ENCODE measurements at regions of chr3 and their contacts with region 1.

Region 1: DNA sequence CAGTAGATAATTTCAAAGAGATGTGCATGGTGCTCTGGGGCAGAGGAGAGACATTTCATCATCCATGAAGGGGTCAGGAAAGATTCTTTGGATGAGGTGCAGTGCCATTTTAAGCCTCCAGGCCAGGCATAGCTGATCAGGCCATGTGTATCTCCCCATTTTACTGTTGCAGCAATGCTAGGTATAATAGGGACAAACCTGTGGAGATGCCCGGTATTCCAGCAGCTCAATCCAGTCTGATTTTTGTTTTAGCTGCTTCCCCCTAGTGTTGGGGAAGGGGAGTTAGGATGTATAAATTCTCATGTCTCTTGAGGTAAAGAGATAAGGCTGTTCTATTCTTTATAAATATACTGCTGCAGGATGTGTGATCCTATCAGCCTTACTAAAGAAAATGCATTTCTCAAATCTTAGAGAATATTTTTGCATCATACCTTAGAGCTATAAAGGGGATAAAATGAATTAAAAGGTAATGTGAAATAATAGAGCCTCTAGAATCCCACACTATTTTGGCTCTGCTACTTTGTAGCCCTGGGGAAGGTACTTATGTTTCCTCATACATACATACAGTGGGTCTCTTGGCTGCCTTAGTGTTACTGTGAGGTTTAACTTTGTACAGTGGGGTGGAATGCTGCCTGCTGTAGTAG is 5.2 kb downstream of the CDV3 start:
- DNase-seq: peak; percentile 53
- H3K4me3 ChIP-seq: no peak overlapping the region
- H3K27ac ChIP-seq: no peak overlapping the region
- H3K4me1 ChIP-seq: peaks cover 26% of the 10 kb centered on the region
- H3K27me3 ChIP-seq: no peaks in the 10 kb centered on the region
- CTCF ChIP-seq: peak; percentile 49 to 56
- POLR2A ChIP-seq: no peak

Region 2: DNA sequence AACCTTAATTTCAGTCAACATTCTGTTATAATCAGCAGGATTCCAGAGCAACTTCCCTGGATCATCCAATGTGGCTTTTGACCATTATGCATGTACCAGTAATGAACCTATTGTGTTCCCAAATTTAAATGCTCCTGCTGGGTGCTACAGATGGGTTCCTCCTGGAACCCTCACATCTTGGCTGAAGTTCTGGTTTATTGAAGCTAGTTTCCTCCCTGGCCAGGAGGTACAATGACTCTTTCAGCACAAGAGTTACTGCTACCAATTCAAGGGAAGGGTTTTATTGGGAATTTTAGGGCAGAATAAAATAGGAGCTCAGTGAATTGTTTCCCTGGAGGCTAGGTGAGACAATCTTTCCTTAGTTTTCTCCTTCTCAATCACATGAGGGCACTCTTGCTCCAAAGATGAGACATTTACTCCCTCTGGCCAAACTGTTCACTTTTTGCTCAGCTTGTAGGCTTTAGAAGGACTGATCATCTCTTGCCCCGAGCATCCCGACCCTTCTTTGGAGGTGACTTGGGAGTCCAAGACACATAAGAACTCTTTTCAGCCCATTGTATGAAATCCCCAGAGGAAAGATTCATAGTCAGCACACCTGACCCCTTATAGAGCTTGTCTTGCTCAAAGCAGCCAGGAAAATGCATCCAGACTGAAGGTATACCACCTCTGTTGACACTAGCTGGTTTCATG is 847.6 kb before region 1 on chr3:
- CTCF ChIA-PET with region 1: interaction called, 19 read pairs
- POLR2A ChIA-PET with region 1: no interaction called
- dilution Hi-C with region 1: no loop called
- intact Hi-C with region 1: no loop called
- DNase-seq: peak; percentile 61
- H3K4me3 ChIP-seq: no peak overlapping the region
- H3K27ac ChIP-seq: no peak overlapping the region
- H3K4me1 ChIP-seq: peaks cover 2% of the 10 kb centered on the region
- H3K27me3 ChIP-seq: peaks cover 7 to 18% of the 10 kb centered on the region in 2 experiments
- CTCF ChIP-seq: peak; percentile 27 to 40
- POLR2A ChIP-seq: no peak

Region 3: GRCh38 chr3:133237380-133237779 is 341.3 kb before region 1 on chr3:
- CTCF ChIA-PET with region 1: no interaction called
- POLR2A ChIA-PET with region 1: no interaction called
- dilution Hi-C with region 1: no loop called
- intact Hi-C with region 1: no loop called
- DNase-seq: no peak
- H3K4me3 ChIP-seq: no peak overlapping the region
- H3K27ac ChIP-seq: no peak overlapping the region
- H3K4me1 ChIP-seq: no peaks in the 10 kb centered on the region
- H3K27me3 ChIP-seq: no peaks in the 10 kb centered on the region
- CTCF ChIP-seq: no peak
- POLR2A ChIP-seq: no peak

Region 4: GRCh38 chr3:133441867-133442270 is 136.8 kb before region 1 on chr3:
- CTCF ChIA-PET with region 1: interaction called, 11 read pairs
- POLR2A ChIA-PET with region 1: no interaction called
- dilution Hi-C with region 1: no loop called
- intact Hi-C with region 1: no loop called
- DNase-seq: no peak
- H3K4me3 ChIP-seq: no peak overlapping the region
- H3K27ac ChIP-seq: no peak overlapping the region
- H3K4me1 ChIP-seq: no peaks in the 10 kb centered on the region
- H3K27me3 ChIP-seq: peaks cover 0 to 4% of the 10 kb centered on the region in 2 experiments
- CTCF ChIP-seq: no peak
- POLR2A ChIP-seq: no peak

Region 5: DNA sequence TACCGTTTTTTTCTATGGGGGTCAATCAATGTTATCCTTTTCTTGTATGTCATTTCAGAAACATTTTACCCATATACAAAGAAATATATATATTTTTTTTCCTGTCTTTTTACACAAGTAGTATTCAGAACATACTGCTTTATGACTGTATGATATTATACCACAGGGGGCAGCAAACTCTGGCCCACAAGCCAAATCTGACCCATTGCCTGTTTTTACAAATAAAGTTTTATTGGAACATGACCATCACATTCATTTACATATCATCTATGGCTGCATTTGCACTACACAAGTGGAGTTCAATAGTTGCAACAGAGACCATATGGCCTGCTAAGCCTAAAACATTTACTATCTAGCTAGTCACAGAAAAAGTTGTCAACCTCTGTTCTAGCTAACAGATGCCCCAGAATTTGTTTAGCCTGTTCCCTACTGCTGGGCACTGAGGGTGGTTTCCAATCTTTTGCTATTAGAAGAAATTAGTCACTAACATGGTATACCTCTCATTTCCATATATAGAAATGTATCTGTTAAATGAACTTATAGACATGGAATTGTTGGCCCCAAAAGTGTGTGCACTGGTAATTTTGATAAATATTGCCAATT is 121.1 kb before region 1 on chr3:
- CTCF ChIA-PET with region 1: interaction called, 11 read pairs
- POLR2A ChIA-PET with region 1: no interaction called
- dilution Hi-C with region 1: no loop called
- intact Hi-C with region 1: no loop called
- DNase-seq: no peak
- H3K4me3 ChIP-seq: no peak overlapping the region
- H3K27ac ChIP-seq: no peak overlapping the region
- H3K4me1 ChIP-seq: no peaks in the 10 kb centered on the region
- H3K27me3 ChIP-seq: peaks cover 9 to 12% of the 10 kb centered on the region in 2 experiments
- CTCF ChIP-seq: no peak
- POLR2A ChIP-seq: no peak

Region 6: DNA sequence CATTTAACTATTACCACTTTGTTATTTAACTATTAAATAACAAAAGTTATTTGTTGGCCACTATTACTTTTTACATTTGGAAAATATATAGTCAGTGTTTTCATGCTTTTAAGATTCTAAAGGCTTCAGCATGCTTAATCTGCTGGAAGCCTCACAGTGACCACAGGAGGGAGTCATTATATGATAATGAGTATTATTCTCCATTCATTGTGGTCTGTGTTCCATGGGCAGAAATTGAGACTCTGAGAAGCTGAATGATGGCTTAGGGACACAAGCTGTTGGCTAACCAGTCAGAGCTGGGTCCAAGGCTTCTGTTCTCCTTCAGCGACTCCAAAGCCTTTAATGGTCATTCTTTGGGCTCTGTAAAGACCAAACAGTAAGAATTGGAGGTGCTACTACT is 114.1 kb before region 1 on chr3:
- CTCF ChIA-PET with region 1: interaction called, 32 read pairs
- POLR2A ChIA-PET with region 1: interaction called, 4 read pairs
- dilution Hi-C with region 1: no loop called
- intact Hi-C with region 1: loop called (anchors 1 kb)
- DNase-seq: peak; percentile 52
- H3K4me3 ChIP-seq: no peak overlapping the region
- H3K27ac ChIP-seq: no peak overlapping the region
- H3K4me1 ChIP-seq: no peaks in the 10 kb centered on the region
- H3K27me3 ChIP-seq: peaks cover 4 to 13% of the 10 kb centered on the region in 2 experiments
- CTCF ChIP-seq: peak; percentile 13 to 25
- POLR2A ChIP-seq: no peak

Region 7: DNA sequence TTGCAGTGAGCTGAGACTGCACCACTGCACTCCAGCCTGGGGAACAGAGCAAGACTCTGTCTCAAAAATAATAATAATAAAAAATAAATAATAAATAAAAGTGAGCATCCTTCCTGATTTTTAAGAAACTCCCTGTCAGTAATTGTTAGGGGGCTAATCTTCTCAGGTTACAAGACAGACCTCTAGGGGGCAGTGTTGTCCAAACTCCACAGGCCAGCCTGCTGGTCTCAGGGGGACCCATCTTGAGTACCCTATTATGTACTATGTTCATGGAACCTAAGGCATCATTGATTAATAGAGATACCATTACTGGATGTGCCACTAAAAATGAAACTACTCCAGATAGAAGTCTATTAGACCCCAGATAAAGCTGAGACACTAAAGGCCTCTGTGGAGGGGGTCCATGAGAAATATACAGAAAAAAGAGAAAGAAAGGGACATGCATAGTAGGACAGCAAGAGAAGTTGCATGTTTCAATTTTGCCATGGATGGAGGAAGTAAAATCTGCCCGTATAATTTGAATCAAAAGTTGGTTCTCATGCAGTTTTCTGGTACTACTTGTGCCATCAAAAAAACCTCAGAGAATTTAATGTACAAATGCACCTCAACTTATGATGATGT is 90.6 kb before region 1 on chr3:
- CTCF ChIA-PET with region 1: interaction called, 224 read pairs
- POLR2A ChIA-PET with region 1: no interaction called
- dilution Hi-C with region 1: no loop called
- intact Hi-C with region 1: loop called (anchors 1 kb)
- DNase-seq: peak; percentile 37
- H3K4me3 ChIP-seq: no peak overlapping the region
- H3K27ac ChIP-seq: no peak overlapping the region
- H3K4me1 ChIP-seq: no peaks in the 10 kb centered on the region
- H3K27me3 ChIP-seq: no peaks in the 10 kb centered on the region
- CTCF ChIP-seq: peak; percentile 53 to 54
- POLR2A ChIP-seq: no peak

Region 8: GRCh38 chr3:133494469-133494868 is 84.2 kb before region 1 on chr3:
- CTCF ChIA-PET with region 1: interaction called, 224 read pairs
- POLR2A ChIA-PET with region 1: interaction called, 4 read pairs
- dilution Hi-C with region 1: no loop called
- intact Hi-C with region 1: loop called (anchors 1 kb)
- DNase-seq: no peak
- H3K4me3 ChIP-seq: no peak overlapping the region
- H3K27ac ChIP-seq: no peak overlapping the region
- H3K4me1 ChIP-seq: peaks cover 6% of the 10 kb centered on the region
- H3K27me3 ChIP-seq: no peaks in the 10 kb centered on the region
- CTCF ChIP-seq: peak; percentile 44 to 46
- POLR2A ChIP-seq: no peak

Measured in endothelial cell of umbilical vein (primary cell).